A673 (cell line): ENCODE measurements at regions of chr5 and their contacts with region 1.

Region 1: GRCh38 chr5:83076742-83077661 is at the starts of genes TMEM167A and XRCC4:
- DNase-seq: peak; percentile 99
- H3K4me3 ChIP-seq: peak within 1 kb of the TSS; percentile 84
- H3K27ac ChIP-seq: peak within 1 kb of the TSS; percentile 82
- H3K4me1 ChIP-seq: peaks cover 11% of the 10 kb centered on the region
- H3K27me3 ChIP-seq: no peaks in the 10 kb centered on the region
- CTCF ChIP-seq: no peak
- total RNA-seq, gene TMEM167A: 90.5 and 93.8 TPM in 2 replicates
- total RNA-seq, gene XRCC4: 8.1 and 10.1 TPM in 2 replicates

Region 2: GRCh38 chr5:82673057-82673809 is 403.8 kb before region 1 on chr5:
- CTCF ChIA-PET with region 1: no interaction called
- POLR2A ChIA-PET with region 1: no interaction called
- intact Hi-C with region 1: no loop called
- DNase-seq: no peak
- H3K4me3 ChIP-seq: no peak overlapping the region
- H3K27ac ChIP-seq: no peak overlapping the region
- H3K4me1 ChIP-seq: peaks cover 3% of the 10 kb centered on the region
- H3K27me3 ChIP-seq: no peaks in the 10 kb centered on the region
- CTCF ChIP-seq: no peak

Region 3: GRCh38 chr5:83430130-83431010 is 353.4 kb after region 1 on chr5:
- CTCF ChIA-PET with region 1: no interaction called
- POLR2A ChIA-PET with region 1: no interaction called
- intact Hi-C with region 1: loop called (anchors 10 kb)
- DNase-seq: peak; percentile 69
- H3K4me3 ChIP-seq: no peak overlapping the region
- H3K27ac ChIP-seq: no peak overlapping the region
- H3K4me1 ChIP-seq: no peaks in the 10 kb centered on the region
- H3K27me3 ChIP-seq: no peaks in the 10 kb centered on the region
- CTCF ChIP-seq: peak; percentile 95